PC-3 (cell line): ENCODE measurements at regions of chr11 and their contacts with region 1.

Region 1: DNA sequence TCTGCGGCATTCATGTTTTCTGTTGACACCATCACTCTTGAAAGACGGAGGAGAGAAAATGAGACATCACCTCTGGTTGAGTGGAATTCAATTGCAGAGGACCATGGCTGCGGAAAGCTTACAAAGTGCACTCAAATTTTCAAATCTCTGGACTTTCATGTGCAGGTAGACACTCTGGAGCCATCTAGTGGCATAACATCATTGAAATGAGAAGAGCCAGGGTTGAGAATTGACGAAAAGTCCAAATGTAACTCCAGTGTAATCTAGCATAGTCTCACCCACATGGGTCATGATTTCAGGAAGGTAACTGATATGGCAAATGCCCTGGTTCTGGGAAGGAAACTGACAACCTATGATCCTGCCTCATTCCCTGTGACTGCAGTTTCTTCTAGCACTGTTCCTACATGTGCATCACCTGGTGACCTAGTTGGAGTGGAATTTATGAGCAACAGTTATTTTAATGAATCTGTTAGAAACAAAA is 687.8 kb downstream of the KCNA4 start:
- DNase-seq: peak; percentile 77
- ATAC-seq: peak; percentile 88
- H3K4me3 ChIP-seq: no peak overlapping the region
- H3K27ac ChIP-seq: no peak overlapping the region
- H3K4me1 ChIP-seq: peaks cover 27% of the 10 kb centered on the region
- H3K27me3 ChIP-seq: no peaks in the 10 kb centered on the region
- CTCF ChIP-seq: peak; percentile 89

Region 2: GRCh38 chr11:28529540-28530410 is 799.2 kb before region 1 on chr11:
- CTCF ChIA-PET with region 1: no interaction called
- POLR2A ChIA-PET with region 1: no interaction called
- intact Hi-C with region 1: loop called (anchors 5 kb)
- DNase-seq: peak; percentile 83
- ATAC-seq: peak; percentile 65
- H3K4me3 ChIP-seq: no peak overlapping the region
- H3K27ac ChIP-seq: no peak overlapping the region
- H3K4me1 ChIP-seq: peaks cover 7% of the 10 kb centered on the region
- H3K27me3 ChIP-seq: no peaks in the 10 kb centered on the region
- CTCF ChIP-seq: peak; percentile 68

Region 3: DNA sequence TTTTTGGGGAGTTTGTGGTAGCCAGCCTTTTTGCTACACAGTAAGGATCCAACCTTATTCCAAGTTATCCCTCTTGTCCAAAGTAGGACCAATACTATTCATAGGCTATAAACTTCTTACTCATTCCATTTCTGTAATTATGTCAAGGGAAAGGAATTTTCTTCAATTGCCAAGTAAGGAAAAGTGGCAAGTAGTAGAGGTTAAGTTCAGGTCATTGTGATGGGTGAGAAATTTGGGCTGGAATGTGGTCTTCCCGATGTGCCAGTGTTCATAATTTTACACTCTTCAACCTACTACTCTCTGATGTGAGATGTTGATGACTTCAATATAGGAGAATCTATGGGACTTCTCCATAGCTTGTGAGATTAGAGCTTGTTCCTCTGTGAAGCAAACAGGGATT is 572.0 kb before region 1 on chr11:
- CTCF ChIA-PET with region 1: no interaction called
- POLR2A ChIA-PET with region 1: no interaction called
- intact Hi-C with region 1: no loop called
- DNase-seq: peak; percentile 89
- ATAC-seq: peak; percentile 59
- H3K4me3 ChIP-seq: peak overlapping the region; percentile 16; the same call in 1 of the 2 replicates
- H3K27ac ChIP-seq: peak overlapping the region; percentile 79
- H3K4me1 ChIP-seq: peaks cover 66% of the 10 kb centered on the region
- H3K27me3 ChIP-seq: no peaks in the 10 kb centered on the region
- CTCF ChIP-seq: no peak

Region 4: GRCh38 chr11:29159552-29160465 is 169.2 kb before region 1 on chr11:
- CTCF ChIA-PET with region 1: interaction called, 7 read pairs
- POLR2A ChIA-PET with region 1: interaction called, 9 read pairs
- intact Hi-C with region 1: loop called (anchors 2 kb)
- DNase-seq: peak; percentile 84
- ATAC-seq: peak; percentile 93
- H3K4me3 ChIP-seq: no peak overlapping the region
- H3K27ac ChIP-seq: no peak overlapping the region
- H3K4me1 ChIP-seq: peaks cover 7% of the 10 kb centered on the region; the same call in 1 of the 2 replicates
- H3K27me3 ChIP-seq: no peaks in the 10 kb centered on the region
- CTCF ChIP-seq: peak; percentile 88

Region 5: DNA sequence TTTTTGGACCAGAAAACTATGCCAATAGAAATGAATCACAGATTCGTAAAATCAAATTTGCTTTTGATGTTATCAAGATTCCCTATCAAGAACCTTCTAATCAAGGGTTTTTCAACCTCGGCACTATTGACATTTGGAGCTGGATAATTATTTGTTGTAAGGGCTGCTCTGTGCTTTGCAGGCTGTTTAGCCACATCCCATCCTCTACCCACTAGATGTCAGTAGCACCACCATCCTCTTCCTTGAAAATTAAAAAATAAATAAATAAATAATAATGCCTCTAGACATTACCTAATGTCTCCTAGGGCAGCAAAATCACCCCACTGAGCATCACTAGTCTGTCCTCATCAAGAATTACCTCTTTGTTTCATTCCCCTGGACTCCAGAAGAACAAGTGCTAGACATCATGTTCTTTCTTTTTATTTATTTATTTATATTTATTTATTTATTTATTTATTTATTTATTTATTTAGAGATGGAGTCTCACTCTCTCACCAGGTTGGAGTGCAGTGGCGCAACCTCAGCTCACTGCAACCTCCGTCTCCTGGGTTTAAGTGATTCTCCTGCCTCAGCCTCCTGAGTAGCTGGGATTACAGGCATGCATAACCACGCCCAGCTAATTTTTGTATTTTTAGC is 56.9 kb before region 1 on chr11:
- CTCF ChIA-PET with region 1: interaction called, 10 read pairs
- POLR2A ChIA-PET with region 1: no interaction called
- intact Hi-C with region 1: loop called (anchors 1 kb)
- DNase-seq: peak; percentile 45
- ATAC-seq: peak; percentile 87
- H3K4me3 ChIP-seq: no peak overlapping the region
- H3K27ac ChIP-seq: no peak overlapping the region
- H3K4me1 ChIP-seq: peaks cover 7% of the 10 kb centered on the region
- H3K27me3 ChIP-seq: no peaks in the 10 kb centered on the region
- CTCF ChIP-seq: peak; percentile 58